Transverse colon (tissue), 4 donors: ENCODE measurements at regions of chr18 and their contacts with region 1.

Region 1: DNA sequence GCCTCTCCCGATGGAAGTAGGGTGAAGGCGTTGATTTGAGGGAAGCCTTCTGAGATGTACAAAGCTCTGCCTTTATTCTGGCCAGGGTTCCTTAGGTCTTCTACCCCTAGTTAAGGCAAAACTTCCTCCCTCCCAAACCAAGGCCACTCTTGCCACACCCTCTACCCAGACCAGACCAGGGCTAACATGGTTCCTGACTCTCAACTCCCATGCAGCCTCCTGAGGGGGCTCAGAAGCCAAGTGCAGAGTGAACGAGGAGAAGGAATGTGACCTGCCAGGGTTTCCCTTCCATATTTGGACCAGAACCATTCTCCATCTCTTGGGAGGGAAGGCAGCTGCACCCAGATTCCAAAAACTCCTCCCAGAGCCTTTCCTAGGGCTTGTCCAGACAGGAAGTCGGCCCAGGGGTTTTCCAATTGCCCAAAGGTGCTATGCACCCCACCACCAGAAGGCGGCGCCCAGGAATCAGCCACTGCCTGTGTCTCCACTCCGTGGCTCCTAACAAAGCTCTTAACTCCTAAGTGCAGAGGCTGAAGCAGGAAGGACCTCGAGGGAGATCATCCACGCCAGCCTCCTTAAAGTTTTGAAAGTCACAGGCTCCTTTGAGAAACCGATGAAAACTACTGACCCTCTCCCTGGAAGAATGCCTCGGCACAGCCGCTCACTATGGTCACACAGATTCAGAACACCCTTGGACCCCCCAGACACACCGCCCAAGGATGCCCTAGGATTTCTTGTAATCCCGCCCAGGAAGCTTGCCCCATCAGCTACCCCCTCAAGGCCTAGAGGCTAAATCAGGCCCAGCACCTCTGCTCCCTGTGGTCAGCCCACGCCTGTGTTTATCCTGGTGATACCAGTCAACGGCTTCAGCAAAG is 157.8 kb downstream of the SMAD2 start:
- DNase-seq: peak; percentile 77
- H3K4me3 ChIP-seq: no peak overlapping the region
- H3K27ac ChIP-seq: no peak overlapping the region
- H3K4me1 ChIP-seq: no peaks in the 10 kb centered on the region
- H3K27me3 ChIP-seq: peaks cover 6% of the 10 kb centered on the region
- CTCF ChIP-seq: peak; percentile 79 to 89 (median 89)
- EP300 ChIP-seq: no peak
- POLR2A ChIP-seq: no peak

Region 2: GRCh38 chr18:47528343-47528742 is 244.3 kb before region 1 on chr18:
- in situ Hi-C with region 1: no loop called
- intact Hi-C with region 1: no loop called
- DNase-seq: no peak
- H3K4me3 ChIP-seq: no peak overlapping the region
- H3K27ac ChIP-seq: no peak overlapping the region
- H3K4me1 ChIP-seq: no peaks in the 10 kb centered on the region
- H3K27me3 ChIP-seq: peaks cover 12% of the 10 kb centered on the region
- CTCF ChIP-seq: no peak
- EP300 ChIP-seq: no peak
- POLR2A ChIP-seq: no peak

Region 3: GRCh38 chr18:47883771-47884413 is 111.3 kb after region 1 on chr18:
- in situ Hi-C with region 1: loop called in 1 of 4 experiments (anchors 25 kb)
- intact Hi-C with region 1: no loop called
- DNase-seq: no peak
- H3K4me3 ChIP-seq: no peak overlapping the region
- H3K27ac ChIP-seq: no peak overlapping the region
- H3K4me1 ChIP-seq: peaks cover 0 to 8% (median 0%) of the 10 kb centered on the region in 4 donors
- H3K27me3 ChIP-seq: no peaks in the 10 kb centered on the region
- CTCF ChIP-seq: no peak
- EP300 ChIP-seq: no peak
- POLR2A ChIP-seq: no peak

Region 4: DNA sequence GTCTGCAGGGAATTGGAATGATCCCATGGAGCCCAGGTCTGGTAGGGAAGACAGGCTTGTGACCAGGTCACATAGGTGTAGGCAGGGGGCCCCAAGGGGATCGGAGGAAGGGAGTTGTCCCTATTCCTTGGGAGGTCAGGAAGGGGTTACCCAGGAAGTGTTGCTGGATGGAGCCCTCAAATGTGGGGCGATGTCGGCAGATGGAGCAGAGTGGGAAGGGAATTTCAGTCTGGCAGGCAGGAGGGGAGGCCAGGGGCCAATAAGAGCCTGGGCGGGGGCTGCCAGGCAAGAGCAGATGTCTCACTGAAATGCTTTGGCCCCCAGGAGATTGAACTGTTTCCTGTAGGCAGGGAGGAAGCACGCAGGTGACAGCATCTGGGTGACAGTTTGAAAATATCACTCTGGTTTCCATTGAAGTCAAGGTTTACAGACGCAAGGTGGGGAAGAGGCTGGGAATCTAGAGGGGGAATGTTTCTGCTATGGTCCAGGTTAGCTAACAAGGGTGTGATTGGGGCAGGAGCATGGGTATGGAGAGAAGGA is 239.4 kb after region 1 on chr18:
- in situ Hi-C with region 1: loop called in 3 of 4 experiments (anchors 5 to 10 kb)
- intact Hi-C with region 1: no loop called
- DNase-seq: no peak
- H3K4me3 ChIP-seq: no peak overlapping the region
- H3K27ac ChIP-seq: no peak overlapping the region
- H3K4me1 ChIP-seq: peaks cover 0 to 6% (median 3%) of the 10 kb centered on the region in 4 donors
- H3K27me3 ChIP-seq: no peaks in the 10 kb centered on the region
- CTCF ChIP-seq: no peak
- EP300 ChIP-seq: no peak
- POLR2A ChIP-seq: no peak

Region 5: DNA sequence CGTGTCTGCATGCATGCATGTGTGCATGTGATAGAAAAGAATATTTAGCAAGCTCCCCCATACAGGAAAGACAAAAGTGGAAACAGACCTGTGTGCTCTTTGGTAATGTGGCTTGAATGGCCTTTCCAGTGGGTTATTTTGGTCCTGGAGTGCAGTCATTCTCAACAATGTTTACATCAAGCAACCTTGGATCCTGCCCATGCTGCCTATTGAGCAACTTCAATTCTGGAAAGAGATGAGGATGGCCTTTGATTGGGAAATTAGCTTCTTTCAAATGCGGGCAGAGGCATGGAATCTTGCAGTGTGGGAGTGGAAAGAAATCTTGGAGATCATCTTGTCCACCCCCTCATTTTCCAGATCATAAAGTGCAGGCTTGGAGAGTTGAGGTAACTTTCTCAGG is 245.0 kb after region 1 on chr18:
- in situ Hi-C with region 1: loop called (anchors 5 to 10 kb)
- intact Hi-C with region 1: no loop called
- DNase-seq: no peak
- H3K4me3 ChIP-seq: no peak overlapping the region
- H3K27ac ChIP-seq: no peak overlapping the region
- H3K4me1 ChIP-seq: no peaks in the 10 kb centered on the region
- H3K27me3 ChIP-seq: peaks cover 23% of the 10 kb centered on the region
- CTCF ChIP-seq: no peak
- EP300 ChIP-seq: no peak
- POLR2A ChIP-seq: no peak

Region 6: GRCh38 chr18:48022531-48023329 is 250.1 kb after region 1 on chr18:
- in situ Hi-C with region 1: loop called in 3 of 4 experiments (anchors 5 to 10 kb)
- intact Hi-C with region 1: no loop called
- DNase-seq: no peak
- H3K4me3 ChIP-seq: no peak overlapping the region
- H3K27ac ChIP-seq: no peak overlapping the region
- H3K4me1 ChIP-seq: peaks cover 0 to 5% (median 0%) of the 10 kb centered on the region in 4 donors
- H3K27me3 ChIP-seq: peaks cover 23% of the 10 kb centered on the region
- CTCF ChIP-seq: peak; percentile 40 to 66 (median 55)
- EP300 ChIP-seq: no peak
- POLR2A ChIP-seq: no peak

Region 7: GRCh38 chr18:48445540-48445939 is 672.9 kb after region 1 on chr18:
- in situ Hi-C with region 1: loop called in 3 of 4 experiments (anchors 10 to 25 kb)
- intact Hi-C with region 1: no loop called
- DNase-seq: peak; percentile 83
- H3K4me3 ChIP-seq: no peak overlapping the region
- H3K27ac ChIP-seq: no peak overlapping the region
- H3K4me1 ChIP-seq: peaks cover 0 to 7% (median 3%) of the 10 kb centered on the region in 4 donors
- H3K27me3 ChIP-seq: peaks cover 20% of the 10 kb centered on the region
- CTCF ChIP-seq: peak; percentile 73 to 87 (median 81)
- EP300 ChIP-seq: no peak
- POLR2A ChIP-seq: no peak